Activated T-helper 1 cell treated with anti-CD3 and anti-CD28 coated beads, Interleukin-12 subunit alpha, Interleukin-12 subunit beta, Interleukin-2, Interleukin-4 antibody, amounts not matched to agents 30 ng/mL and 10 ng/mL and 1 ng/mL, durations not matched to agents 14 hours and 24 hours and 36 hours (primary cell): ENCODE measurements at regions of chr1 and their contacts with region 1.

Region 1: DNA sequence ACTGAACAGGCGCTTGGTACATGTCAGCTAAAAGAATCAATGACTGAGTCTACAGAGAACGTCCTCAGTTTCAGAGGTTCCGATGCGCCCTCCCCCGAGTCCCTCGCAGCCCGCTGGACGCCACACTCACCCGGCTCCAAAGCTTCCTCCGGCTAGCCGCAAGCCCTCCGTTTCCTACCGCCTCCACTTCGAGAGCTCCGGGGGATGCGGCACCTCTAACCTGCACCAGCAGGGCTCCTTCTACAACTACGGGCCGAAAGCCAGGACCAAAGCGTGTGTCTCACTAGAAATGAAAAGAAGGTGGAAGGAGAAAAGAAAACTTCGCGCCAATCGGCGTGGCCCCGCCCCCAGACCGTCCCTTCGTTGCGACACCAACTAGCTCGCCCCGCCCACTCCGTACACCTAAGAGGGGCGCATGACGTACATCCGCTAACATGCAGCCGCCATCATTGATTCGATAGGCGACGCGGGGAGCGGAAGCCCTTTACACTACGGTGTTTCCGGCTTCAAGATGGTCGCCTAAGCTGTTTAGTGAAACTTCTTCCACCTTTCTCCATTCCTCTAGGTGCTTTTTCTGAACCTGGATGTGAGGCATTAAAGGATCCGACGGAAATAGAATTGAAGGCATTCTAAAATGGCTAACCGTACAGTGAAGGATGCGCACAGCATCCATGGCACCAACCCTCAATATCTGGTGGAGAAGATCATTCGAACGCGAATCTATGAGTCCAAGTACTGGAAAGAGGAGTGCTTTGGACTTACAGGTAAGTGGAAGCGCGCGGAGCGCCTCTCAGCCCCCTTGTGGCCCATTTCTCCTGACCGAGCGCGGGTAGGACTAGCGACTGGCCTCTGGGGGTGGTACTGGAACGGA is at the starts of genes ORC1 and PRPF38A:
- DNase-seq: peak; percentile 94
- H3K4me3 Mint-ChIP-seq: peak within 1 kb of the TSS; percentile 100
- H3K27ac Mint-ChIP-seq: peak within 1 kb of the TSS; percentile 100
- H3K4me1 Mint-ChIP-seq: peaks cover 45% of the 10 kb centered on the region
- H3K27me3 Mint-ChIP-seq: no peaks in the 10 kb centered on the region
- total RNA-seq, gene ORC1: 39.6 and 40.3 TPM in 2 replicates
- total RNA-seq, gene PRPF38A: 103 and 105 TPM in 2 replicates

Region 2: GRCh38 chr1:52056163-52056936 is 348.0 kb before region 1 on chr1 and contains the start of gene BTF3L4:
- intact Hi-C with region 1: loop called (anchors 1 kb)
- DNase-seq: peak; percentile 92
- H3K4me3 Mint-ChIP-seq: peak within 1 kb of the TSS; percentile 100
- H3K27ac Mint-ChIP-seq: peak within 1 kb of the TSS; percentile 100
- H3K4me1 Mint-ChIP-seq: peaks cover 72% of the 10 kb centered on the region
- H3K27me3 Mint-ChIP-seq: no peaks in the 10 kb centered on the region
- total RNA-seq, gene BTF3L4: 44.9 and 47.5 TPM in 2 replicates

Region 3: GRCh38 chr1:52253401-52253800 is 150.9 kb before region 1 on chr1:
- intact Hi-C with region 1: no loop called
- DNase-seq: no peak
- H3K4me3 Mint-ChIP-seq: no peak overlapping the region
- H3K27ac Mint-ChIP-seq: no peak overlapping the region
- H3K4me1 Mint-ChIP-seq: no peaks in the 10 kb centered on the region
- H3K27me3 Mint-ChIP-seq: no peaks in the 10 kb centered on the region

Region 4: DNA sequence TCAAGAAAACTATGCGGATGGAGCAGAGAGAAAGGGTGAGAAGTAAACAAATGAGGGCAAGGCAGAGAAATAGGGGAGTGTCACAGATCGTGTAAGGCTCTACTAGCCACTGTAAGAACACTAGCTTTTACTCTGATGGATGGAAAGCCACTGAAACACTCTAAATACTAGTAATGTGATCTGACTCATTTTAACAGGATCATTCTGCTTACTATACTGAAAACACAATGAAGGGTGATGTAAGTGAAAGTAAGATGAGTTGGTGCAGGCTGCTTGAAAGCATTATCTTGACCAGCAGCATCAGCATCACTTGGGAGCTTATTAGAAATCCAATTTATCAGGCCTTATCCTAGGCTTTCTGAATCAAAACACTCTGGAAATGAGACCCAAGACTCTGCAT is 115.8 kb after region 1 on chr1:
- intact Hi-C with region 1: loop called (anchors 10 kb)
- DNase-seq: no peak
- H3K4me3 Mint-ChIP-seq: no peak overlapping the region
- H3K27ac Mint-ChIP-seq: peak overlapping the region; percentile 73
- H3K4me1 Mint-ChIP-seq: peaks cover 26% of the 10 kb centered on the region
- H3K27me3 Mint-ChIP-seq: no peaks in the 10 kb centered on the region

Region 5: DNA sequence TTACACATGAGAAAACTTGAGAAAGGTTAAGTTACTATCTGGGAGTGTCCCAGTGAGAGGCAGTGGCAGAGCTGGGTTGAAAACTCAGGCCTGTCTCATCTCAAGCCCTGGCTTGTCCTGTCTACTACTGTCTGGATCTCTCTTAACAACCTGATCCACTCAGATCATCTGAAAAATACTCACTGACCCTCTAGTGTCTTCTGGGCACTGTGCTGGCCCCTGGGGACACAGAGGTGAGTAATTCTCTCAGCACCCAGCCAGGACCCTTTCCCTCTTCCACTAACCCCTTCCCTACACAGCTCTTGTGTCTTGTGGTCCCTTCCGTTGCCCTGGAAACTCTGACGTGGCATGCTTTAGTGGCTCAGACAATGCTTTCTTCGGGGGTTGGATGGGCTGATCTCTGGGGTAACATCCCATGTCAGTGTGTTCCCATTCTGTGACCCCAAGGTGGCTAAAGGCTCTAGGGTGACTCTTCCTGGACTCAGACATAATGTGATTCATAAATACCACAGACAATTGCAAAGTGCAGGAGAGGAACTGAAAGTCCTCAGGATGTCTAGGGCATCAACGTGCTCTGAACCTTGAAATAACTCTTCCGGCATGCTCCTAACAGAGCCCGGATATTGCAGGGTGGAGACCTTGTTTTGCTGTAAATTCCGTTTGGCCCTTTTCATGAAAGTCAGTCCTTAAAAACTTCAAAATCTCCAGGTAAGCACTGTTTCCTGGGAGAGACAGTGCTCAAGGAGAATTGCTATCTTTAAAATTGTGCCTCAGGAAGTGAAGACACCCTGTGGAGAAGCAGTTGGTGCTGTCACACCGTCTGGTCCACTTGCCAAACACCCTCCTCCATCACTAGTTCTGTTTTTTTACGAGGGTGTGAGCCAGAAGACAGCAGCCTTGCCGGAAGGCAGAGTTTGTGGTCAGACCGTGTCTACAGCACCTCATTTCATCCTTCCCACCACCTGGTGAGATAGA is 232.7 kb after region 1 on chr1:
- intact Hi-C with region 1: loop called (anchors 1 kb)
- DNase-seq: peak; percentile 78
- H3K4me3 Mint-ChIP-seq: peak overlapping the region; percentile 77
- H3K27ac Mint-ChIP-seq: peak overlapping the region; percentile 99
- H3K4me1 Mint-ChIP-seq: peaks cover 68% of the 10 kb centered on the region
- H3K27me3 Mint-ChIP-seq: peaks cover 2% of the 10 kb centered on the region

Region 6: DNA sequence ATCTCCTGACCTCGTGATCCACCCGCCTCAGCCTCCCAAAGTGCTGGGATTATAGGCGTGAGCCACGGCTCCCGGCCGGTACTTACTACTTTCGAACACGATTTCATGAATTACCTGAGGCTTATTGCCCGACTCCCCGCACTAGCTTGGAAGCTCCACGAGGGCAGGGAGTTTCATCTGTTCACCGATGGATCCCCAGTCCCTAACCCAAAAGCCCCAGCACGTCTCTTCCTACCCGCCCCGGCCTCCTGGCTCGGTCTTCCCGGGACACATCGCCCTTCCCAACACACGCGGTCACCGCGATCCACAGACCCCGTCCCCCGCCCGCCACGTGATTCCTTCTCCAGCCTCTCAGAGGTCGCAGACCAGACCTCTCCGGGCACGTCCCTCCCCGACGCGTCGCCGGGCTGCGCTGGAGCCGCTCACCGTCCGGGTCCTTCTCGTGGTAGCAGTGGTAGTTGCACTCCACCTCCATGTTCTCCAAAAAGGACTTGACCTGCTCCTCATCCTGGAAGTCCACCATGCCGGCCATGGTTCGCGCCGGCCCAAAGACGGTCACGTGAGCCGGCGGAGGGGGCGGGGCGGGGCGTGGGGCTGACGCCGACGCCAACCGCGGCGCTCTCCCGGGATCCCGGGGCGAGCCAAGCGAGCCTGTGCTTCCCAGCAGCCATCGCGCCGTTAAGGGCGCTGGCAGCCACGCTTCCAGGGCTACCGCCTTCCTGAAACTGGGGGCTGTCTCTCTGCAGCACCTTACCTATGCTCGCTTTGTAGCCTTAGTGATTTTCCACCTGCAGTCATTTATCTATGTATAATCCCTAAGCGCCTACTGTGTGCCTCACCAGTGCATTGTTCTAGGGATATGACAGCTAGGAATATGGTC is 293.7 kb after region 1 on chr1 and contains the start of gene COA7:
- intact Hi-C with region 1: loop called (anchors 1 kb)
- DNase-seq: peak; percentile 62
- H3K4me3 Mint-ChIP-seq: peak within 1 kb of the TSS; percentile 95
- H3K27ac Mint-ChIP-seq: peak within 1 kb of the TSS; percentile 89
- H3K4me1 Mint-ChIP-seq: peaks cover 41% of the 10 kb centered on the region
- H3K27me3 Mint-ChIP-seq: peaks cover 4% of the 10 kb centered on the region
- total RNA-seq, gene COA7: 37.6 and 39.9 TPM in 2 replicates

Region 7: DNA sequence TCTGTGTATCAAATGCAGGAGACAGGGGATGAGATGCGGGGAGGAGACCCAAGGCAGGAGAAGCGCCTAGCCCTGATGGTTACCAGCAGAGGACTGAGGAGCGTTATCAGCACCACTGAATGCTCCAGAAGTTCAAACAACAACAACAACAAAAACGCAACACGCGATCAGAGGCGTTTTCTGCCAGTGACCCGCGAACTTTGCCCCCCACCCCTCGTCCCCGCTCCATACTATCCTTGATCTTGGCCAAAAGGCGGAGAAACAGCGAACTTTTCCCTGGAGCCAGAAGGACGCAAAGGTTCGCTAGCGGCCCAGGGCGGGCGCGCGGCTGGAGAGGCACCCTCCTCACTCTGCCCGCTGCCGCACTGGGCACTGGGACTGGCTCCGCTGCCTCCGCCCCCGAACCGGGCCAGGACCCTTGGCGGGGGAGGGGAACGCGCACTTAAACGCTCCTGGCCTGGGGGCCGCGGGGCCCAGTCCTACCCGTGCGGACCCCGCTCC is 516.5 kb after region 1 on chr1:
- intact Hi-C with region 1: loop called (anchors 5 kb)
- DNase-seq: no peak
- H3K4me3 Mint-ChIP-seq: peak overlapping the region; percentile 86
- H3K27ac Mint-ChIP-seq: no peak overlapping the region
- H3K4me1 Mint-ChIP-seq: peaks cover 14% of the 10 kb centered on the region
- H3K27me3 Mint-ChIP-seq: peaks cover 2% of the 10 kb centered on the region

Region 8: GRCh38 chr1:53220171-53220961 is 816.0 kb after region 1 on chr1 and contains the start of gene CZIB:
- intact Hi-C with region 1: loop called (anchors 1 kb)
- DNase-seq: peak; percentile 92
- H3K4me3 Mint-ChIP-seq: peak within 1 kb of the TSS; percentile 90
- H3K27ac Mint-ChIP-seq: peak within 1 kb of the TSS; percentile 97
- H3K4me1 Mint-ChIP-seq: peaks cover 30% of the 10 kb centered on the region
- H3K27me3 Mint-ChIP-seq: peaks cover 2% of the 10 kb centered on the region
- total RNA-seq, gene CZIB: 43.6 and 45.2 TPM in 2 replicates